ENCODE measurements at regions of chr17 and their contacts with region 1.

Region 1: DNA sequence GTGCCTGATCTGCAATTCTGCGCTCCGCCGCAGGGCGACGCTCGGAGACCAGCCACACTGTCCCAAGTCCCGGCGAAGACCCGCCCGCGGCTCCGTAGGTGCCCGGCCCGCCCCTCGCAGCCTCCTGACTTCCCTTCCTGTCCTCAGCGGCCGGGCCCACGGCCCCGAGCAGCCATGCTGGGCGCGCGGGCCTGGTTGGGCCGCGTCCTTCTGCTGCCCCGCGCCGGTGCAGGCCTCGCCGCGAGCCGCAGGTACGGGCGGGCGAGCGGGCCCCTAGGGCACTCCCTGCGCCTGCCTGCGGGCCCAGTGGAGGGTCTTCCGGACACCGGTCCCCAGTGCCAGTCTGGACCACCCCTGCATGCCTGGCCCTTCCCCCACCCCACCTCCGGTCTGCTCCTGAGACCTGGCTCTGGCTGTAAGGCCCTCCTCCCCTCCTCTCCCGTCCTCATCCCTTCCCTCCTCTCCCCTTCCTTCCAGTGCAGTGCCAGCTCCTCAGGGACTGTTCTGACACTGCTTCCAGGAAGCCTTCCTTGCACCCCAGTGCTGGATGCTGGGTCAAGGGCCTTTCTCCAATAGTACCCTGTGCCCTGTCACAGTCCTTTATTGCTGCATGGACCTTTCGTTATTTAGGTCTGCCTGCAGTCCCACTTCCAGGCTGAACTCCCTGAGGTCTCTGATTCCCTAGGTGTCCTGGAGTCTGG is at the start of gene SPATA20:
- DNase-seq: peak; percentile 76 to 93 (median 88)
- H3K4me3 ChIP-seq: peak within 1 kb of the TSS; percentile 40 to 83 (median 70)
- H3K27ac ChIP-seq: peak within 1 kb of the TSS in 55 of 59 donors; percentile 12 to 92 (median 65)
- H3K27me3 ChIP-seq: no peaks in the 10 kb centered on the region
- CTCF ChIP-seq: peak; percentile 82 to 99 (median 97)
- total RNA-seq, gene SPATA20: 29.4 to 85.3 (median 53.1) TPM

Region 2: DNA sequence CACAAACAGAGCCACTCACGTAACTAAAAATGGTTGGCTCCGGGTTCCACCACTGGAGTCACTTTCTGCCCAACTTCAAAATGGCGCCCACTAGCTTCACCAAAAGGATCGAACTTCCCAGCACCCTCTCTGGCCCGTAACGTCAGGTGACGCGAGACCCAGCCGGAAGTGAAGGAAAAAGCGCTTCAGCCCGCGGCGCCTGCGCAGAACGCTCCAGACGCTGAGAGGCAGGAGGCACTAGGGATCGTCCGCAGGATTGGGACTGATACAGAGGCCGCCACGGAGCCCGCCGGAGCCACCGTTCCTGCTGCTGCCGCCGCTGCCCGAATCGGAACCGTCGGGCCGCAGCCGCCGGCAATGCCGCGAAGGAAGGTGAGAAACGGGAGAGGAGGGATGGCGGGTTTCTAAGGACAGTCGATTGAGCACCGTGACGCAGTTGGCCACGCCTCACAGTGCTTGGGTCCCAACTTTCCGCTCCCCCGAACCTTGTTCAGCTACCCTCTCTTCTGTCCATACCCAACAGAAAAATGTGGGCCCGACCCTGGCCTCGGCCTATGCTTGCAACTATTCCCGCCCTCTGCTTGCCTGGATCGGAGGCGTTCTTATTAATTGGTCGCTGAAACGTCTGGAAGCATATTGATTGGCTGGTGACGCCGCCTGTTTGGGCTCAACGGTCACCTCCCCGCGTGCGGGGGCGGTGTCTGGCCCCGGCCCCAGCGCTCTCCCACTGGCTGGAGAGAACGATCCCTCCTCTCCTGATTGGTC is 758.5 kb before region 1 on chr17 and contains the start of gene KAT7:
- intact Hi-C with region 1: no loop called
- DNase-seq: peak; percentile 96 to 100 (median 99)
- H3K4me3 ChIP-seq: peak within 1 kb of the TSS; percentile 68 to 100 (median 99)
- H3K27ac ChIP-seq: peak within 1 kb of the TSS; percentile 86 to 100 (median 99)
- H3K27me3 ChIP-seq: no peaks in the 10 kb centered on the region
- CTCF ChIP-seq: peak in 54 of 56 donors; percentile 21 to 73 (median 54)
- total RNA-seq, gene KAT7: 73.9 to 129 (median 102) TPM

Region 3: DNA sequence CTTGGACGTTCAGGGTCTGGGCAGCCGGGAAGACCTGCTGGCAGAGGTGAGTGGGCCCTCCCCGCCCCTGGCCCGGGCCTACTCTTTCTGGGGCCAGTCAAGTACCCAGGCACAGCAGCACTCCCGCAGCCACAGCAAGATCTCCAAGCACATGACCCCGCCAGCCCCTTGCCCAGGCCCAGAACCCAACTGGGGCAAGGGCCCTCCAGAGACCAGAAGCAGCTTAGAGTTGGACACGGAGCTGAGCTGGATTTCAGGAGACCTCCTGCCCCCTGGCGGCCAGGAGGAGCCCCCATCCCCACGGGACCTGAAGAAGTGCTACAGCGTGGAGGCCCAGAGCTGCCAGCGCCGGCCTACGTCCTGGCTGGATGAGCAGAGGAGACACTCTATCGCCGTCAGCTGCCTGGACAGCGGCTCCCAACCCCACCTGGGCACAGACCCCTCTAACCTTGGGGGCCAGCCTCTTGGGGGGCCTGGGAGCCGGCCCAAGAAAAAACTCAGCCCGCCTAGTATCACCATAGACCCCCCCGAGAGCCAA is 78.9 kb after region 1 on chr17:
- intact Hi-C with region 1: loop called (anchors 2 to 5 kb)
- DNase-seq: peak in 7 of 10 donors; percentile 36 to 74 (median 47)
- H3K4me3 ChIP-seq: no peak overlapping the region
- H3K27ac ChIP-seq: peak overlapping the region in 22 of 59 donors; percentile 1 to 70 (median 38)
- H3K27me3 ChIP-seq: peaks cover 0 to 9% (median 0%) of the 10 kb centered on the region in 45 donors
- CTCF ChIP-seq: peak in 55 of 56 donors; percentile 32 to 75 (median 65)

Region 4: DNA sequence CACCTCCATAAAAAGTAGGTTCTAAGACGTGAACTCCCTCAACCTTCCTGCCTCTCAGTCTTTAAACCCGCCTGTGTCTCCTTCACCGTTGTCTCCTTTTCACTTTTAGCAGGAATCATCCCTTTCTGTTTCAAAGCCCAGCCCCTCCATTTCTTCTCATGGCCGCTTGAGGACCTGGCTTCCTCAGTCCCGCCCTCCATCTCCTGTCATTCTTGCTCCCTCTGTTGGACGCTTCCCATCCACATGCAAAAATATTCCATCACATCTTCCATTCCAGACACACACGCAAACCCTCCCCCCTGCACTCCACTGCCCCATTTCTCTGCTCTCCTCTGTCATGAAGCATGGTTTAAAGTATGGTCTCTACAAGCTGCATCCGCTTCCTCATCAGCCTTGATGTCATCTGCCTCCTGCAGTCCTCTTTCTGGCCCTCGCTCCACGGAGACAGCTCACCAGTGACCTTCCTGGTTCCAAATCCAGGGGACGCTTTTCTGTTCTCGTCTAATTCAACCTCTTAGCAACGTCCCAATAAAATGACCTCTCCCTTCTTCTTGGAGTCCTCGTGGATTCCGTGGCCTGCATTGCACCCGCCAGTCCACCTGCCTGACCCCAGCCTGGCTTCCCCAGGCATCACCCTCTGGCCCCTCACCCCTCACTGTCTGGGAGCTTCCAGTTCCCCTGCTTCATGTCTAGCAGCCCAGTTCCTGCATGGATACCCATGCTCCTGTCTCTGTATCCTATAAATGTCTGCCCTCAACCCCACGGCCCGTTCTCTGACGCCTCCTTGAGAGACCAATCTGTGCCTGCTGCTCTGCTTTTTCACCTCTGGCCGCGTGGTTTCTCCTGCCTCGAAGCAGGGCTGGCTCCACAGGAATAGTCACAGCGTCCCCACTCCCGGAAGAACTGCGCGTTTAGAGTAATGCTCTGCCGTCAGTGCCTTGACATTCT is 134.4 kb after region 1 on chr17:
- intact Hi-C with region 1: loop called in 1 of 2 experiments (anchors 5 kb)
- DNase-seq: peak in 8 of 10 donors; percentile 26 to 64 (median 51)
- H3K4me3 ChIP-seq: peak overlapping the region in 9 of 59 donors; percentile 1 to 21 (median 14)
- H3K27ac ChIP-seq: peak overlapping the region in 20 of 59 donors; percentile 4 to 66 (median 40)
- H3K27me3 ChIP-seq: no peaks in the 10 kb centered on the region
- CTCF ChIP-seq: peak in 53 of 56 donors; percentile 15 to 70 (median 46)

Region 5: GRCh38 chr17:50689251-50689650 is 142.1 kb after region 1 on chr17:
- intact Hi-C with region 1: loop called in 1 of 2 experiments (anchors 2 kb)
- DNase-seq: no peak
- H3K4me3 ChIP-seq: no peak overlapping the region
- H3K27ac ChIP-seq: no peak overlapping the region
- H3K27me3 ChIP-seq: no peaks in the 10 kb centered on the region
- CTCF ChIP-seq: no peak

Region 6: GRCh38 chr17:50697663-50698274 is 150.6 kb after region 1 on chr17:
- intact Hi-C with region 1: loop called (anchors 2 to 5 kb)
- DNase-seq: peak in 1 of 10 donors; percentile 12
- H3K4me3 ChIP-seq: no peak overlapping the region
- H3K27ac ChIP-seq: peak overlapping the region in 1 of 59 donors; percentile 21
- H3K27me3 ChIP-seq: no peaks in the 10 kb centered on the region
- CTCF ChIP-seq: peak in 10 of 56 donors; percentile 6 to 25 (median 18)

Region 7: GRCh38 chr17:50841949-50842354 is 294.8 kb after region 1 on chr17:
- intact Hi-C with region 1: loop called (anchors 1 to 2 kb)
- DNase-seq: peak in 9 of 10 donors; percentile 77 to 87 (median 84)
- H3K4me3 ChIP-seq: peak overlapping the region in 1 of 59 donors; percentile 8
- H3K27ac ChIP-seq: peak overlapping the region in 26 of 59 donors; percentile 2 to 90 (median 56)
- H3K27me3 ChIP-seq: no peaks in the 10 kb centered on the region
- CTCF ChIP-seq: peak; percentile 43 to 97 (median 89)

Region 8: GRCh38 chr17:50949989-50950881 is 403.1 kb after region 1 on chr17:
- intact Hi-C with region 1: loop called in 1 of 2 experiments (anchors 10 kb)
- DNase-seq: peak; percentile 67 to 86 (median 80)
- H3K4me3 ChIP-seq: peak overlapping the region in 19 of 59 donors; percentile 0 to 49 (median 15)
- H3K27ac ChIP-seq: peak overlapping the region; percentile 21 to 95 (median 81)
- H3K27me3 ChIP-seq: no peaks in the 10 kb centered on the region
- CTCF ChIP-seq: peak; percentile 61 to 98 (median 88)

Measured in dorsolateral prefrontal cortex (tissue), 120 donors.